HCT116 (cell line): ENCODE measurements at regions of chr9 and their contacts with region 1.

Region 1: DNA sequence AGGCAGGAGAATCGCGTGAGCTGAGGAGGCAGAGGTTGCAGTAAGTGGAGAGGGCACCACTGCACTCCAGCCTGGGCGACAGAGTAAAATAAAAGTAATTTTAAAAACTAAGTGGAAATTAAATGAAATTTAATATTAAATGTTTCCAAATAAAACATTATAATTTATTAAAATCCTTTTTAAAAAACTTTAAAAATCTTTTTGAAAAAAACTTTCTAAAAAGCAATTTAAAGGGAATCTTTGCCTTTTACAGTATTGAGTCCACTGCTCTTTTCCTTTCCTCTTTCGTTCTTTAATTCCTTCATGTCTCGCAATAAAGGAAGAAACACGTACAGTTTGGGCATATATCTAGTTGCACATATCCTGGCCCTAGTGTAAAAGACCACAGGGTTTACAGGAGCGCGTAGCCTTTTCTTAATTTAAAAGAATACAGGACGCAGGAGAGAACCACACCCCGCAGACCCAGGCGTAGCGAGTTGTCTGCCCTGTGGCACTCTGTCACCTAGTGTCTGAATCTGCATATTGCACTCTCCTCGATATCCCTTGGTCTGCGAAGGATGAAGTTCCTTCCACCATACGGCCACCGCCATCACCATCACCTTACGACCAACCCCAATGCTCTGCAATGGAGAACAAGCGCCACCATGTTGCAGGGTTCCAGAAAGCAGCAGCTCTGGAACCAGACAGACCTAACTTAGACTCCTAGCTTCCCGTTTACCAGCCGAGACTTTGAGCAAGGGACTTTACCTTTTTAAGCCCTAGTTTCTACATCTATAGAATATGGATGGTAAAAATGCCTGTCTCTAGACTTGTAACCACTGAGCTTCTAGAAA is 77.6 kb upstream of the DMRT1 start:
- DNase-seq: peak; percentile 90
- ATAC-seq: peak; percentile 100
- H3K4me3 ChIP-seq: no peak overlapping the region; a peak in 1 of 4 replicates
- H3K27ac ChIP-seq: no peak overlapping the region
- H3K4me1 ChIP-seq: peaks cover 3 to 6% of the 10 kb centered on the region in 2 experiments; a peak in 3 of 4 replicates
- H3K27me3 ChIP-seq: peaks cover 4% of the 10 kb centered on the region; the same call in 1 of the 2 replicates
- CTCF ChIP-seq: peak; percentile 81 to 96 (median 93)
- POLR2A ChIP-seq: no peak
- RAD21 ChIP-seq: peak; percentile 95

Region 2: DNA sequence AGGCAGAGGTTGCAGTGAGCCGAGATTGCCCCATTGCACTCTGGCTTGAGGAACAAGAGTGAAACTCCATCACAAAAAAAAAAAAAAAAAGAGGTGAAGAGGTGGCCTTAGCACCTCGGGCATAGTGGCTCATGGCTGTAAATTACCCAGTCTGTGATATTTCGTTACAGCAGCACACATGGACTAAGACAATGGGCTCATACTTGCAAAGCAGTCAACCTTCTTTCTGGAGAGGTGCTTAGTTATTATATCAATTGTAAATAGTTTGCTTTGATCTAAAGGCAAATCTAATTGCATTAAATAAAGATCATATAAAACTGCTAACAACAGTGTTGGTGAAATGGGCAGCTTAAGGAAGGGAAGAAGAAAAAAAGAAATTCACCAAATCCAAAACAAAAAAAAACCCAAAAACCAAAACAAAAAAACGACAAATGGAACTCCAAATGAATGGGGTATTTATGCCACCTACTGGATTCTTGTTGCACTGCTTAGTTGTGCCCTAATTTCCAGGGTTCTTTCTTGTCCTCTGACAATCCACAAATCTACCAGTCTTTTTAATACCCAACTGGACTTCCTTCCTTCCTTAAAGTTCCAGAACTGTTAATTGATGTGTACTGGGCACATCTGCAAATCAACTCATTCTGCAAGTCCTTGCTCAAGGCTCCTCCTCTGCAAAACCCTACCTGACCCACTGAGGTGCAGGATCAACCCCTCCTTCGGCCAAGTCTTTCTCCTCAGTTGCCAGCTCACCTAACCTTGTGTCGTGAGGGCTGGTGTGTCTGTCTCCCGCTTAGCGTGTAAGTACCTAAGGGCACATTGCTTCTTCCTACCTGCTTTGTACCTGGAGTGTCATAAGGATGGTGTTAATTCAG is 42.6 kb after region 1 on chr9:
- CTCF ChIA-PET with region 1: no interaction called
- POLR2A ChIA-PET with region 1: no interaction called
- RAD21 ChIA-PET with region 1: no interaction called
- intact Hi-C with region 1: loop called (anchors 1 kb)
- DNase-seq: no peak
- ATAC-seq: peak; percentile 77
- H3K4me3 ChIP-seq: no peak overlapping the region
- H3K27ac ChIP-seq: no peak overlapping the region
- H3K4me1 ChIP-seq: peaks cover 0 to 6% of the 10 kb centered on the region in 2 experiments; a peak in 2 of 4 replicates
- H3K27me3 ChIP-seq: no peaks in the 10 kb centered on the region
- CTCF ChIP-seq: peak; percentile 56 to 77 (median 56); a peak in 5 of 6 replicates
- POLR2A ChIP-seq: no peak
- RAD21 ChIP-seq: peak; percentile 69

Region 3: GRCh38 chr9:942805-943580 is 179.1 kb after region 1 on chr9:
- CTCF ChIA-PET with region 1: no interaction called
- POLR2A ChIA-PET with region 1: no interaction called
- RAD21 ChIA-PET with region 1: no interaction called
- intact Hi-C with region 1: no loop called
- DNase-seq: no peak
- ATAC-seq: no peak
- H3K4me3 ChIP-seq: no peak overlapping the region
- H3K27ac ChIP-seq: no peak overlapping the region
- H3K4me1 ChIP-seq: no peaks in the 10 kb centered on the region
- H3K27me3 ChIP-seq: no peaks in the 10 kb centered on the region
- CTCF ChIP-seq: no peak
- POLR2A ChIP-seq: no peak
- RAD21 ChIP-seq: no peak